ENCODE measurements at regions of chr1 and their contacts with region 1.

Region 1: GRCh38 chr1:13960375-13960987 is 260.5 kb downstream of the PRDM2 start:
- DNase-seq: peak; percentile 75
- ATAC-seq: peak; percentile 58
- H3K4me3 ChIP-seq: no peak overlapping the region
- H3K4me3 Mint-ChIP-seq: no peak overlapping the region
- H3K27ac ChIP-seq: no peak overlapping the region
- H3K27ac Mint-ChIP-seq: no peak overlapping the region
- H3K4me1 ChIP-seq: no peaks in the 10 kb centered on the region
- H3K4me1 Mint-ChIP-seq: no peaks in the 10 kb centered on the region
- H3K27me3 ChIP-seq: peaks cover 0 to 14% (median 0%) of the 10 kb centered on the region in 4 experiments
- H3K27me3 Mint-ChIP-seq: peaks cover 64% of the 10 kb centered on the region
- CTCF ChIP-seq: peak; percentile 96

Region 2: GRCh38 chr1:13469343-13469742 is 491.1 kb before region 1 on chr1:
- CTCF ChIA-PET with region 1: no interaction called
- POLR2A ChIA-PET with region 1: no interaction called
- intact Hi-C with region 1: loop called (anchors 5 kb)
- DNase-seq: no peak
- ATAC-seq: no peak
- H3K4me3 ChIP-seq: no peak overlapping the region
- H3K4me3 Mint-ChIP-seq: no peak overlapping the region
- H3K27ac ChIP-seq: no peak overlapping the region
- H3K27ac Mint-ChIP-seq: no peak overlapping the region
- H3K4me1 ChIP-seq: no peaks in the 10 kb centered on the region
- H3K4me1 Mint-ChIP-seq: no peaks in the 10 kb centered on the region
- H3K27me3 ChIP-seq: no peaks in the 10 kb centered on the region
- H3K27me3 Mint-ChIP-seq: peaks cover 19% of the 10 kb centered on the region
- CTCF ChIP-seq: no peak

Region 3: DNA sequence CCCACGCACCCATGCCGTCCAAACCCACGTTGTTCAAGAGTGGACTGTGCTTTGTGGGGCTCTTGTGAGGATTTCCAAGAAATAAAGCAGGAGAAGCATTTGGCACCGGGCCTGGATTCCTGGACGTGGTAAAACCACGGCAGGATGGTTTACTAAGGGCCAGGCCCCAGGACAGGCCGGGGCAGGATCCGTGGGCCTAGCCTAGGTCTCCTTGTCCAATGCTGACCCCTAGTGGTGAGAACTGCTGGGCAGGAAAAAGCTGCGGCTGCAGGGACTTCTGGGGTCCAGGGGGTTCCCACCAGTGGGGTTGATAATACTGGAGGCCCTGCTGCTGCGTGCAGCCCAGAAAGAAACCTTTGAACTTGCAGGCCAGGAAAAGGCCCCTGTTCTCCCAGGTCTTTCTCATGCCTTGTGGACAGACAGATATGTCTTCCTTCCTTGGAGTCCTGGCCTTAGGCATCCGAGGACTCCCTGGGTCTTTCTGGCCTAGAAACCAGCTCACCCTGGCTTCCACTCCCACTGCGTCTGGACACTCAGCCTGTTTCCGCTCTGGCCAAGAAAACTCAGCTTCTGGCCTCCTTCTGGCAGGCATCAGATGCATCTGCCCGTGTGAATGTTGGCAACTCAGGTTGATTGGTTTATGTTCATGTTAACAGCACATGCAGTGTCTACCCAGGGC is 1086.1 kb after region 1 on chr1:
- CTCF ChIA-PET with region 1: no interaction called
- POLR2A ChIA-PET with region 1: no interaction called
- intact Hi-C with region 1: loop called (anchors 10 kb)
- DNase-seq: peak; percentile 55
- ATAC-seq: peak; percentile 24
- H3K4me3 ChIP-seq: no peak overlapping the region
- H3K4me3 Mint-ChIP-seq: no peak overlapping the region
- H3K27ac ChIP-seq: no peak overlapping the region
- H3K27ac Mint-ChIP-seq: no peak overlapping the region
- H3K4me1 ChIP-seq: no peaks in the 10 kb centered on the region
- H3K4me1 Mint-ChIP-seq: no peaks in the 10 kb centered on the region
- H3K27me3 ChIP-seq: no peaks in the 10 kb centered on the region
- H3K27me3 Mint-ChIP-seq: no peaks in the 10 kb centered on the region
- CTCF ChIP-seq: peak; percentile 80